Activated CD8-positive, alpha-beta T cell treated with anti-CD3 and anti-CD28 coated beads, Interleukin-2, amount 10 ng/mL, durations not matched to agents 7 days and 5 days (primary cell): ENCODE measurements at regions of chr3 and their contacts with region 1.

Region 1: GRCh38 chr3:158659454-158660237 is 12.8 kb downstream of the LXN start:
- DNase-seq: peak; percentile 73
- ATAC-seq: peak; percentile 67
- H3K4me3 Mint-ChIP-seq: no peak overlapping the region
- H3K27ac Mint-ChIP-seq: no peak overlapping the region
- H3K4me1 Mint-ChIP-seq: peaks cover 11% of the 10 kb centered on the region
- H3K27me3 Mint-ChIP-seq: no peaks in the 10 kb centered on the region

Region 2: GRCh38 chr3:158672293-158673176 is 12.9 kb after region 1 on chr3 and contains the start of gene LXN:
- CTCF ChIA-PET with region 1: interaction called, 61 read pairs
- POLR2A ChIA-PET with region 1: interaction called, 5 read pairs
- DNase-seq: peak; percentile 87
- ATAC-seq: peak; percentile 100
- H3K4me3 Mint-ChIP-seq: peak within 1 kb of the TSS; percentile 91
- H3K27ac Mint-ChIP-seq: peak within 1 kb of the TSS; percentile 93
- H3K4me1 Mint-ChIP-seq: peaks cover 29% of the 10 kb centered on the region
- H3K27me3 Mint-ChIP-seq: no peaks in the 10 kb centered on the region
- total RNA-seq, gene LXN: 8.7 to 9.4 TPM

Region 3: DNA sequence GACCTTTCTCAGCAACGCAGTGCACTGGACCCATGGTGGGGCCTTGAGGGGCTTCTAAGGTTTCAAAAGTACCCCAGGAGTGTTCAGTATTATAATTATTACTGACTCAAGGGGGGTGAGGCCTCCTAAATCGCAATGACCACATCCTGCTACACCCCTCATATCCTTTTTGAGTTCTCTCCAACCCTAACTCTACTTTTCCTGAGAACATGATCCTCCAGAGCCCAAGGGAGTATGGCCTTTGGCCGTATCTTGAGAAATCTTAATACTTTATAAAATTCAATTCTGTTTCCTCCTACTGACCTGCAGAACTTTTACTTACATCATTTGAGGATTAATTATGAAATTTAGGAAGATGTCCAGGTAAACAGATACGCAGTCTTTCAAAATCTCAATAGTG is 103.1 kb after region 1 on chr3:
- CTCF ChIA-PET with region 1: no interaction called
- POLR2A ChIA-PET with region 1: no interaction called
- DNase-seq: no peak
- ATAC-seq: no peak
- H3K4me3 Mint-ChIP-seq: no peak overlapping the region
- H3K27ac Mint-ChIP-seq: no peak overlapping the region
- H3K4me1 Mint-ChIP-seq: no peaks in the 10 kb centered on the region
- H3K27me3 Mint-ChIP-seq: no peaks in the 10 kb centered on the region